Naive thymus-derived CD8-positive, alpha-beta T cell (primary cell): ENCODE measurements at regions of chr1 and their contacts with region 1.

Region 1: GRCh38 chr1:25754470-25755181 is 45.4 kb upstream of the SELENON start:
- DNase-seq: peak; percentile 27 to 76 (median 55)
- ATAC-seq: peak; percentile 88 to 96
- H3K4me3 Mint-ChIP-seq: peak overlapping the region; percentile 40 to 88 (median 74)
- H3K27ac Mint-ChIP-seq: peak overlapping the region; percentile 90 to 99 (median 96)
- H3K4me1 Mint-ChIP-seq: peaks cover 28 to 73% (median 50%) of the 10 kb centered on the region in 4 donors
- H3K27me3 Mint-ChIP-seq: no peaks in the 10 kb centered on the region

Region 2: DNA sequence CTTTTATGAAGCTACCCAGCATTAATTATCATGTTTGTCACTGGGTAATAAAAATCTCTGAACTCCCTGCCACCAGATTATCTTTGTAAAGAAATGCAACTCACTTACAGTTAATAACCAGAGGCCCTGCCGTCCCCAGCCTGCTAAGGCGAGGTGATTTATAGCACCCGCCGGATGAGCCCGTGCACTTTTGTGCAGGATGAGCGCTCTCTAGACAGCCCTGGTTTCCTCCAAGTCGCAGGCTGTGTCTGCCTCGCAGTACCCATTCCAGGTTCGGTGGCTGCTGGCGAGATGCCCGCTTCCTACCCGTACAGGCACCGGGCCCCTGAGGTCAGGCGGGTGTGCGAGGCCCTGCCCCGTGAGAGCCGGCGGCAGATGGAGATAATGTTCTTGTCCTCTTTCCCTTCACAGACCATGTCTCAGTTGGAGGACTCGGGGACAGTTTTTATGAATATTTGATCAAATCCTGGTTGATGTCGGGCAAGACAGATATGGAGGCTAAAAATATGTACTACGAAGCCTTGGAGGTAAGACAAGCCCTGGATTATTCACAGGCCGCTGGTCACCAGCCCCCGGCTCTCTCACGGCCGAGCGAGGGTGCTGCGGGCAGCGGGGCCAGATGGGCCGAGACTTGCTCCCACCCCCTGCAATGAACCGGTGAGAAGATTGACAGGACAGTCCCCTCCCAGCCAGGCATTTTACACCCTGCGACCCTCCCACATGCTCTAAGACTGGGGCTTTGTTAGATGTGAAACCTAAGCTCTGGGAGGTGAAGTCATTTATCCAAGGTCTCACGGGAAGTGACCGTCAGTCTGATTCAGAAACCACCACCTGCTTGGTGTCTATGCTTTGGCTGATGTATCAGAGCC is 16.9 kb after region 1 on chr1:
- POLR2A ChIA-PET with region 1: interaction called, 23 read pairs
- DNase-seq: peak in 9 of 10 donors; percentile 27 to 76 (median 54)
- ATAC-seq: peak; percentile 11 to 12
- H3K4me3 Mint-ChIP-seq: peak overlapping the region; percentile 41 to 88 (median 78)
- H3K27ac Mint-ChIP-seq: peak overlapping the region; percentile 85 to 99 (median 98)
- H3K4me1 Mint-ChIP-seq: peaks cover 59 to 100% (median 83%) of the 10 kb centered on the region in 4 donors
- H3K27me3 Mint-ChIP-seq: peaks cover 0 to 3% (median 0%) of the 10 kb centered on the region in 5 donors